Panc1 (cell line): ENCODE measurements at regions of chrX and their contacts with region 1.

Region 1: GRCh38 chrX:71214604-71215337 is 8.3 kb upstream of the GJB1 start:
- DNase-seq: no peak
- ATAC-seq: peak; percentile 51; the same call in 1 of the 2 replicates
- H3K4me3 ChIP-seq: no peak overlapping the region
- H3K27ac ChIP-seq: no peak overlapping the region
- H3K4me1 ChIP-seq: no peaks in the 10 kb centered on the region
- H3K27me3 ChIP-seq: no peaks in the 10 kb centered on the region
- CTCF ChIP-seq: no peak

Region 2: DNA sequence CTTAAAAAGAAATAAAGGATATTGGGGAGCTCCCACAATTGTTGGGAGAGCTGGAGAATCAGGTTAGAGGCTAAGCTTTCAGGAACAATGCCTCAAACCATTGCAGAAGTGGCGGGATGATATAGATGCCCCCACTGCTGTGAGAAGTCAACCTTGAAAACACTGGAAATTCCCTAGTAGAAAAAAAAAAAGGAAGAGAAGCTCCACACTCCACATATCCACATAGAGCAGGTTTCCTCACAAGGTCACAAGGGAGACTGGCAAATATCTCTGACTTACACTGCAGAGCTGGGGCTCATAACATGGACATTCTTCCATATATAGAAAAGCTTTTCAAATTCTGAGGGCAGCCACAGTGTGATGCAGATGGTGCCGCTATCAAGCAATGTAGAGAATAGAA is 295.4 kb after region 1 on chrX:
- CTCF ChIA-PET with region 1: no interaction called
- POLR2A ChIA-PET with region 1: no interaction called
- in situ Hi-C with region 1: no loop called
- intact Hi-C with region 1: no loop called
- DNase-seq: no peak
- ATAC-seq: no peak
- H3K4me3 ChIP-seq: no peak overlapping the region
- H3K27ac ChIP-seq: no peak overlapping the region
- H3K4me1 ChIP-seq: no peaks in the 10 kb centered on the region
- H3K27me3 ChIP-seq: no peaks in the 10 kb centered on the region
- CTCF ChIP-seq: no peak

Region 3: DNA sequence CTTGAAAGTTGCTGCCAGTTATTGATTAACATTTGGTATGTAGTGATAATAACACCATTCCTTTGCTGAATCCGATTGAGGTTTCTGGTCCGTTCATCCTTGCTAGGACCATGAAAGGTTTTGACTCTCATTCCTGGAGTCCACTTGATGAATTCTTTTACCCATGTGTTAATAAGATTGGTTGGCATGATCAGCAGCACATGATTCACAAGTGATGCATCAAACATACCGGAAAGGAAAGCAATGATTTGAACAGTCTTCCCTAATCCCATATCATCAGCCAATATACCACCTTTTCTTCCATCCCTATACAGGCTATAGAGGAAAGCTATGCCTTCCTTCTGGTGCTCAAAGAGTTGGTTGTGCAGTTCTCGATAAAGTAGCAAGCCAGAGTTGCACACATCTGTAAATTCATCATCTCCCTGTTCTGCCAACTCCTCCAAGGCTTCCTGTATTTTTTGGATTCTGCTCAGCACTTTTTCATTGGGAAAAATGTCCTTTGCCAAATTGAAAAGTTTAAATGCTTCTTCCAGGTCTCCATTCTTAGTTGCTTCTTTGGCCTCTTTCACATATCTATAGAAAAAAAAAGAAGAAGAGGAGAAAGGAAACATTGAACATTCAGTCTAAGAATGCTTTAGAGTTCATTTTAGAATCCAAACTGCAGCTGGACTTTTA is 993.5 kb after region 1 on chrX:
- CTCF ChIA-PET with region 1: no interaction called
- POLR2A ChIA-PET with region 1: interaction called, 14 read pairs
- in situ Hi-C with region 1: no loop called
- intact Hi-C with region 1: no loop called
- DNase-seq: no peak
- ATAC-seq: no peak
- H3K4me3 ChIP-seq: no peak overlapping the region
- H3K27ac ChIP-seq: no peak overlapping the region
- H3K4me1 ChIP-seq: no peaks in the 10 kb centered on the region
- H3K27me3 ChIP-seq: no peaks in the 10 kb centered on the region
- CTCF ChIP-seq: no peak